Activated CD4-positive, alpha-beta T cell treated with anti-CD3 and anti-CD28 coated beads for 36 hours (primary cell): ENCODE measurements at regions of chr6 and their contacts with region 1.

Region 1: GRCh38 chr6:96542702-96543101 is 20.2 kb upstream of the FHL5 start:
- DNase-seq: no peak
- ATAC-seq: no peak
- H3K4me3 Mint-ChIP-seq: no peak overlapping the region
- H3K27ac Mint-ChIP-seq: no peak overlapping the region
- H3K4me1 Mint-ChIP-seq: no peaks in the 10 kb centered on the region
- H3K27me3 Mint-ChIP-seq: no peaks in the 10 kb centered on the region

Region 2: DNA sequence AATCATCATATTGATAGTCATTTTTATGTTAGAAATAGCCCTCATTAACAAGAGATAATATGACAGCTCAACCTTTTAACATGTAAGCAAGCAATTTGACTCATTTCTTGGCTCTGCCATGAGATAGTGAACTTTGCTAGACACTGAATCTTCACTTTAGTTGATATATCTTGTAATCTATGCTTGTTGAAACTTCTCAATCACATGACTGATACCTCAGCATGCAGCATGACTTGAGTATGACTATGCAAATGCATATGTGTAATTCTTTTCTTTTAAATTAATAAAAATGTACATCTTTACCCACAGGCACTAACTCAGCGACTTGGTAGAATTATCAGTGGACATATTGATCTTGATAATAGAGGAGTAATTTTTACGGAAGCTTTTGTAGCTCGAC is 14.5 kb before region 1 on chr6:
- CTCF ChIA-PET with region 1: interaction called, 10 read pairs
- POLR2A ChIA-PET with region 1: no interaction called
- intact Hi-C with region 1: no loop called
- DNase-seq: no peak
- ATAC-seq: no peak
- H3K4me3 Mint-ChIP-seq: no peak overlapping the region
- H3K27ac Mint-ChIP-seq: no peak overlapping the region
- H3K4me1 Mint-ChIP-seq: peaks cover 17% of the 10 kb centered on the region
- H3K27me3 Mint-ChIP-seq: no peaks in the 10 kb centered on the region

Region 3: GRCh38 chr6:97059473-97059872 is 516.8 kb after region 1 on chr6:
- CTCF ChIA-PET with region 1: interaction called, 3 read pairs
- POLR2A ChIA-PET with region 1: no interaction called
- intact Hi-C with region 1: loop called (anchors 2 to 5 kb)
- DNase-seq: no peak
- ATAC-seq: peak; percentile 73
- H3K4me3 Mint-ChIP-seq: no peak overlapping the region
- H3K27ac Mint-ChIP-seq: no peak overlapping the region
- H3K4me1 Mint-ChIP-seq: peaks cover 2% of the 10 kb centered on the region
- H3K27me3 Mint-ChIP-seq: no peaks in the 10 kb centered on the region